ENCODE measurements at regions of chr12 and their contacts with region 1.

Region 1: DNA sequence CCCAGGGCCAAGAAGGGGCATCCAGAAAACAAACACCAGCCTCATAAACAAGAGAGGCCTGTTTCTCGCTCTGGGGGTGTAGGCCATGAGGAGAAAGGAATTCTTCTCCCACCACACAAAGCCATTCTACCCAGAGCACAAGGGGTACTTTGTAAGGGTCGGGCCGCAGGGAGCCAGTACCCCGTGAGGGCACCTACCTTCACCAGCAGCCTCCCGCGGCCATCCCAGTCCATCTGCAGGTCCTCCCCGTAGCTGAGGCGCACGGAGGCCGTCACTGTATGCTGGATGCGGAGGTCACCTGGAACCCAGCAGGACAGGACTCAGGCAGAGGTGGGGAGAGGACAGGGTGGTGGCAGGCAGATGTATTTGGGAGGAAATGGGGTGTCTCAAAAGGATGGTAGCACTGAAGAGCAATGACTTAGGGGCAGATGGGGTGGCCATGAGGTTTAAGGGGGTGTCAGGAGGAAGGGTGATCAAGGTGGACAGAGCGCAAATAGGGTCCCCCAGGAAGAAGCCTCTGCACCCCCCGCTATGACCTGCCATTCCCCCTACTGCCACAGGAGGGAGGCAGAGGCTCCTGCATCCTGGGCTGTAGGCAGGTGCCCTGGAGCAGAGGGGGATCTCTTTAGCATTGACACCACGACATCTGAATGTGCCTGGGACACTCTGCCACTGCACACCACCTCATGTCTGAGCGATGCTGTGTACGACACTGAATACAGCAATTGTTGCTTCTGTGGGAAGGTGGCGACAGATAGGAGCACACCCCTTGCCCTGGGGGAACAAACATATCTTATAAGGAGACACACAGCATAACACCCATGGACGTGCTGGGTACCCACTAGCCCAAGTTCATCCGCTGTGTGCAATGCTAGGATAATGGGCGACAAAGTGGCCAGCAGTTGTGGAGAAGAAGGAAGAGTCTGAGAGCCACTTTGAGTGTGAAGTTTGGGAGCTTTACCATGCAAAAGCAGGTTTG is 61.4 kb downstream of the VWF start:
- DNase-seq: no peak
- ATAC-seq: peak; percentile 71 to 81 (median 80)
- H3K4me3 ChIP-seq: no peak overlapping the region
- H3K27ac ChIP-seq: no peak overlapping the region
- H3K4me1 ChIP-seq: no peaks in the 10 kb centered on the region
- H3K27me3 ChIP-seq: peaks cover 0 to 9% (median 2%) of the 10 kb centered on the region in 3 donors
- CTCF ChIP-seq: peak; percentile 72

Region 2: GRCh38 chr12:6187948-6188793 is 125.1 kb after region 1 on chr12:
- intact Hi-C with region 1: loop called in 1 of 2 experiments (anchors 5 kb)
- DNase-seq: no peak
- ATAC-seq: no peak
- H3K4me3 ChIP-seq: no peak overlapping the region
- H3K27ac ChIP-seq: no peak overlapping the region
- H3K4me1 ChIP-seq: no peaks in the 10 kb centered on the region
- H3K27me3 ChIP-seq: peaks cover 0 to 2% (median 0%) of the 10 kb centered on the region in 3 donors
- CTCF ChIP-seq: no peak

Region 3: DNA sequence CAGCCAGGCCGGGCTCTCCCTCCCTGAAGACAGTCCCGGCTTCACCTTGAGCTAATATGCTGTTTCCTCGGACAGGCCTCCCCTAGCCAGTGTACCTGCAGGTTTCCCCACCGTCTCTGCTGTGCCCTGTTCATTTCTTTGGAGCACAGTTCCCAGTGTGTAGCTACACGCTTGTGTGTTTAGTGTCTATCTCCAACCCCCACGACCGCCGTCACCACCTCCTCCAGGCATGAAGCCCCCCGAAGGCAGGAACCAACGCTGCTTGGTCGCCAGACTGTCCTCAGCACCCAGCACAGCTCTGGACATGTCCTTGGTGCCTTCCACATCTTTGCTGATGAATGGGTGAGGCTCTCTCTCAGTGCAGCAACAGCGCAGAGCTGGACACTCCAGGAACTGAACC is 221.2 kb after region 1 on chr12:
- intact Hi-C with region 1: loop called (anchors 1 to 5 kb)
- DNase-seq: no peak
- ATAC-seq: no peak
- H3K4me3 ChIP-seq: no peak overlapping the region
- H3K27ac ChIP-seq: no peak overlapping the region
- H3K4me1 ChIP-seq: peaks cover 19% of the 10 kb centered on the region
- H3K27me3 ChIP-seq: no peaks in the 10 kb centered on the region
- CTCF ChIP-seq: no peak